Cardiac septum (tissue), 1 donor: ENCODE measurements at regions of chr3 and their contacts with region 1.

Region 1: GRCh38 chr3:65785065-65785645 is 253.6 kb downstream of the MAGI1 start:
- DNase-seq: no peak

Region 2: GRCh38 chr3:65914032-65914739 is 129.0 kb after region 1 on chr3:
- intact Hi-C with region 1: no loop called
- DNase-seq: no peak

Region 3: GRCh38 chr3:66138336-66139313 is 353.5 kb after region 1 on chr3:
- intact Hi-C with region 1: loop called (anchors 2 kb)
- DNase-seq: no peak